ENCODE measurements at regions of chr14 and their contacts with region 1.

Region 1: GRCh38 chr14:70086685-70087379 is 101.9 kb downstream of the SLC8A3 start:
- DNase-seq: peak in 1 of 2 donors; percentile 46
- ATAC-seq: peak; percentile 78

Region 2: DNA sequence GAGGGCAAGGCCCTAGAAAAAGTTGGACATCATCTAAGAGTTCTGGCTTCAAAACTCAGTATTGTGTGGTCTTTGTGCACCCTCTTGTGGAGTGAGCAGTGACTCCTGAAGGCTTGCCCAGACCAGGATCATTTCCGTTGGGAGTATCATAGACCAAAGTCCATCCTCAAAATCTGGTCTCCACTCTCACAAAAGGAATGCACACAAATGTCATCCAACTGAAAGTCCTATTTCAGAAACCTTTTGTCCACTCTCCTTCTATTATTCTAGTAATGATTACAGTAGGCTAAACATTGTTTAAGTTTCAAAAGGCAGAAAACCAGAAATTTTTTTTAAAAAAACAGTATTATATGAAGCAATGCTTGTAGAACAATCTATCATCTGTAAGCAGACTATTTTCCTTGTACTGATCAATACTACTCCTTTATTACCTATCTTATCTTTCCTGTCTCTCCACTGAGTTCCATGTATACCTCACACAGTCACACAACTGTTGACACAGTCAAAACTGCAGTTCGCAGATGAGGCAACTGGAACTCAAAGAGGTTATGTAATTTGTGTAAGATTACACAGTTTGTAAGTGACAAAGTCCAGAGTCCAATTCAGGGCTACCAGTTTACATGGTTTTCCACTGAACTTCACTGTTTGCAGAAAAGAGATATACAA is 231.3 kb after region 1 on chr14:
- intact Hi-C with region 1: loop called in 1 of 2 experiments (anchors 10 kb)
- DNase-seq: peak; percentile 30 to 31
- ATAC-seq: peak; percentile 95

Region 3: GRCh38 chr14:70856851-70857495 is 770.1 kb after region 1 on chr14:
- intact Hi-C with region 1: no loop called
- DNase-seq: no peak
- ATAC-seq: no peak